Activated T-helper 1 cell treated with anti-CD3 and anti-CD28 coated beads, Interleukin-12 subunit alpha, Interleukin-12 subunit beta, Interleukin-2, Interleukin-4 antibody, amounts not matched to agents 30 ng/mL and 10 ng/mL and 1 ng/mL, durations not matched to agents 14 hours and 24 hours and 36 hours (primary cell): ENCODE measurements at regions of chr1 and their contacts with region 1.

Region 1: GRCh38 chr1:200448034-200448762 is 38.4 kb upstream of the ZNF281 start:
- DNase-seq: no peak
- H3K4me3 Mint-ChIP-seq: peak overlapping the region; percentile 53
- H3K27ac Mint-ChIP-seq: peak overlapping the region; percentile 97
- H3K4me1 Mint-ChIP-seq: peaks cover 59% of the 10 kb centered on the region
- H3K27me3 Mint-ChIP-seq: no peaks in the 10 kb centered on the region

Region 2: DNA sequence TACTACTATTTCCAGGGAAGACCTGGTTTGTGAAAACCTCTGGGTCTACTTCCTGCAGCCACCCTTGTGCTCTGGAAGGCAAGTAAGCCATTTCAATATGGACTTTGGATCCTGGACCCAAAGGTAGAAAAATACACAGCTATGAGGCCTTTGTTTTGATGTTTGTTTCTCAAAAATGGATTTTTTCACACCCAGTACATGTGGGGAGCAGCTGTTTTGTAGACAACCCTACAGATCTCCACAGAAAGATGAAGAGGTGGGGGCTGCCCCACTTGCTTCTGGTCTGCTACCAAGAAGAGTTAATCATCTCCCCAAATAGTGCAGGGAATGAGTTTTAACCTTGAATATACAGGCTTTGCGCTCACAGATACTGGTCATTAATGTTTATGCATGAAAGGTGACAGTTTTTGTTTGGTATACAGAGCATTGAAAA is 67.6 kb before region 1 on chr1:
- intact Hi-C with region 1: loop called (anchors 2 kb)
- DNase-seq: no peak
- H3K4me3 Mint-ChIP-seq: no peak overlapping the region
- H3K27ac Mint-ChIP-seq: no peak overlapping the region
- H3K4me1 Mint-ChIP-seq: peaks cover 25% of the 10 kb centered on the region
- H3K27me3 Mint-ChIP-seq: no peaks in the 10 kb centered on the region

Region 3: GRCh38 chr1:200392625-200393185 is 55.5 kb before region 1 on chr1:
- intact Hi-C with region 1: no loop called
- DNase-seq: no peak
- H3K4me3 Mint-ChIP-seq: no peak overlapping the region
- H3K27ac Mint-ChIP-seq: no peak overlapping the region
- H3K4me1 Mint-ChIP-seq: no peaks in the 10 kb centered on the region
- H3K27me3 Mint-ChIP-seq: no peaks in the 10 kb centered on the region

Region 4: GRCh38 chr1:200437556-200438203 is 10.5 kb before region 1 on chr1:
- intact Hi-C with region 1: loop called (anchors 1 kb)
- DNase-seq: no peak
- H3K4me3 Mint-ChIP-seq: peak overlapping the region; percentile 69
- H3K27ac Mint-ChIP-seq: peak overlapping the region; percentile 92
- H3K4me1 Mint-ChIP-seq: peaks cover 13% of the 10 kb centered on the region
- H3K27me3 Mint-ChIP-seq: no peaks in the 10 kb centered on the region